Testis (tissue), 5 donors: ENCODE measurements at regions of chr5 and their contacts with region 1.

Region 1: DNA sequence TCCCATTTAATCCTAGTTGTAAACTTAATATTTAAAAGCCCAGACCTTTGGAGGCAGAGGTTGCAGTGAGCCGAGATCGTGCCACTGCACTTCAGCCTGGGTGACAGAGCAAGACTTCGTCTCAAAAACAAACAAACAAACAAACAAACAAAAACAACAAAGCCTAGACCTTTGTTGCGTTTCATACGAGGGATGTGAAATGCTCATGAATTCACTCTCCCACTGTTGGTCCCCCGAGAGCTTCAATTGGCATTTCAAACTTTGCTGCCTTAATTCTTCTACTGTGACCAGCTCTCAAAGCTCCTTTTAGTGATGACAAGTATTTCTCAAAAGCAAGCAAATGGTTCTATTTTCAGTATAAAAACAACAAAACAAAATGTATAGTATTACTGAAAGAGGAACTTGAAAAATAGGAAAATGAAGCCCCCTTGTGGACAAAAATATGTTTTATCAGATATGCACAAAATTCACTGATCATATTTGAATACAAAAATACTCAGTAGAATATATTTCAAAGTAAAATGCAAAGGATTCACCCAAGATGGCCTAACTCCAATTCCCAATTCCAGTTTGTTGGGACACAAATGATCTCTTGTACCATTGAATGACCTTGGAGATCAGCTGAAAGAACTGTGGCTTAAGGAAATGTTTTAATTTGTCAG is 140.4 kb downstream of the ESM1 start:
- DNase-seq: no peak
- H3K4me3 ChIP-seq: no peak overlapping the region
- H3K27ac ChIP-seq: no peak overlapping the region
- H3K4me1 ChIP-seq: no peaks in the 10 kb centered on the region
- H3K27me3 ChIP-seq: no peaks in the 10 kb centered on the region
- CTCF ChIP-seq: peak; percentile 55 to 80 (median 67)
- POLR2A ChIP-seq: no peak

Region 2: DNA sequence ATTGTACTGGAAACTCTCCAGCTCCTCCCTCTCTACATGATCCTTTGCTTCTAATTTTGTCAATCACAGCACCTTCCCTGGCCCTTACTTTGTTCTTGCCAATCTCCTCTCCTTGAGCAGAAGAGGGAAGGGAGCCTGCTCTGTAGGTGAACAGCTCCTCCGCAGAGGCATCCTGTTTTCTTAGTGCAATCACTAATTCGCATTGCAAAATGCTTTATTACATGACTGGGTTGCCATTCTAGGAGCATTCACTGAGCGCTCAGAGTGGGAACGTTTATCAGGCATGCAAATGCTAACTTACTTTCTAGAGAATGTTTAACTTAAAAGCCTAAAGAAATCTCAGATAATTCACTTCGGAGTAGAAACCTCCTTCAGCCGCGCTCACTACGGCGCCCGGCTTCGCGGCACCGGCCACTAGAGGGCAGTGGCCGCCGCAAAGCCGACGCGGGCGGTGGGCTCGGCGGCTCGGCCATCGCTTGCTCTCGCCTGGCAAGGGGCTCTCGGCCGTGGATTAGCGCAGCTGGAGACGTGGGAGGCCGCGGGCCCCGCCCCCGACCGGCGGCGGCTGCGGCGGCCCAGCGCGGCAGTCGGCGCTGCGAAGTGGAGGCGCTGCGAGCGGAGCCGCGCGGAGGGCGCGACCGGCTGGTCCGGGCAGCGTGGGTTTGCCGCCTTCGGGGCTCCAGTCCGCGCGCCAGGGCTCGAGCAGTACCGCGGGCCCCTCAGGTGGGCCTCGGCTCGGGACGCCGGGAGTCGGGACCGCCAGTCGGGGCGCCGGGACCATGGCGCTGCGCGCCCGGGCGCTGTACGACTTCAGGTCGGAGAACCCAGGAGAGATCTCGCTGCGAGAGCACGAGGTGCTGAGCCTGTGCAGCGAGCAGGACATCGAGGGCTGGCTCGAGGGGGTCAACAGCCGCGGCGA is 327.6 kb before region 1 on chr5 and contains the start of gene SNX18:
- intact Hi-C with region 1: loop called (anchors 5 kb)
- DNase-seq: peak; percentile 94
- H3K4me3 ChIP-seq: peak within 1 kb of the TSS; percentile 96 to 98
- H3K27ac ChIP-seq: peak within 1 kb of the TSS; percentile 92 to 96
- H3K4me1 ChIP-seq: peaks cover 18% of the 10 kb centered on the region
- H3K27me3 ChIP-seq: no peaks in the 10 kb centered on the region
- CTCF ChIP-seq: peak; percentile 97 to 99 (median 99)
- POLR2A ChIP-seq: no peak
- total RNA-seq, gene SNX18: 71.9 to 99.7 TPM